ENCODE measurements at regions of chr9 and their contacts with region 1.

Region 1: GRCh38 chr9:109012876-109013678 is at the start of gene CTNNAL1:
- DNase-seq: peak; percentile 74 to 92 (median 87)
- ATAC-seq: peak; percentile 91
- H3K4me3 ChIP-seq: peak within 1 kb of the TSS; percentile 45 to 56
- H3K4me3 Mint-ChIP-seq: peak within 1 kb of the TSS; percentile 95
- H3K27ac ChIP-seq: peak within 1 kb of the TSS; percentile 47 to 68
- H3K27ac Mint-ChIP-seq: peak within 1 kb of the TSS; percentile 91
- H3K4me1 ChIP-seq: peaks cover 7% of the 10 kb centered on the region
- H3K4me1 Mint-ChIP-seq: peaks cover 26% of the 10 kb centered on the region
- H3K27me3 ChIP-seq: no peaks in the 10 kb centered on the region
- H3K27me3 Mint-ChIP-seq: peaks cover 10% of the 10 kb centered on the region
- CTCF ChIP-seq: no peak
- total RNA-seq, gene CTNNAL1: 4.5 to 4.8 TPM

Region 2: DNA sequence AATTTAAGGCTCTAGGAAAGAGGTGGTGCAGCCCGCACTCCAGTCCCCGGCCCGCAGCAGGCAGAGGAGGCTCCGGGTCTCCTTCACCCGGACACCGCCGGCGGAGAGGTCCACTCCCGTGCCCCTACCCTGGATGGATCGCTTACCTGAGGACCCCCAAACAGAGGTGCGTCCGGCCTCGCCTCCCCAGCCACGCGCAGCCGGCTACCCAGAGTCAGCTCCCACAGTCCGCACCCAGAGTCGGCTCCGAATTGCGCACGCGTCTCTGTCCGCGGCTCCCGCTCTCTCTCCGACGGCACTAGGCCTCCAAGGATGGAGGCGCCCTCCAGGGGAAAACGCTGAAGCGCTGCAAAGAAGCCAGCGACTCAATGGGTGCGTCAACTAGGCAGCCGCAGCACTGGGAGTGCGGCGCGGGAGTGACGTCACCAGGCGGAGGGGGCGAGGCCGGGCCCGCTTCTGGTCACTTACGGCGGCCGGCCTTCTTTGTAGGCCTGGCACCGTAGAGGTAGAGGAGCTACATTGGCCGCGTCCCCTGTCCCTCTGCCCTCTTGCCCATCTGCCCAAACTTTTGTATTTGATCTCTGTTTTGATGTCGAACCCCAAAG is 79.3 kb before region 1 on chr9 and contains the start of gene ELP1:
- CTCF ChIA-PET with region 1: no interaction called
- POLR2A ChIA-PET with region 1: no interaction called
- intact Hi-C with region 1: loop called (anchors 1 to 2 kb)
- DNase-seq: peak; percentile 84 to 96 (median 93)
- ATAC-seq: peak; percentile 85
- H3K4me3 ChIP-seq: peak within 1 kb of the TSS; percentile 81 to 95
- H3K4me3 Mint-ChIP-seq: peak within 1 kb of the TSS; percentile 98
- H3K27ac ChIP-seq: peak within 1 kb of the TSS; percentile 92 to 93
- H3K27ac Mint-ChIP-seq: peak within 1 kb of the TSS; percentile 97
- H3K4me1 ChIP-seq: peaks cover 21% of the 10 kb centered on the region
- H3K4me1 Mint-ChIP-seq: peaks cover 52% of the 10 kb centered on the region
- H3K27me3 ChIP-seq: no peaks in the 10 kb centered on the region
- H3K27me3 Mint-ChIP-seq: no peaks in the 10 kb centered on the region
- CTCF ChIP-seq: no peak
- total RNA-seq, gene ELP1: 22.4 to 26.8 TPM

Region 3: GRCh38 chr9:109101810-109102209 is 88.7 kb after region 1 on chr9:
- CTCF ChIA-PET with region 1: no interaction called
- POLR2A ChIA-PET with region 1: no interaction called
- intact Hi-C with region 1: loop called in 1 of 2 experiments (anchors 5 kb)
- DNase-seq: peak in 2 of 9 experiments; percentile 38 to 73
- ATAC-seq: peak; percentile 72
- H3K4me3 ChIP-seq: peak overlapping the region; percentile 21 to 38
- H3K4me3 Mint-ChIP-seq: peak overlapping the region; percentile 73
- H3K27ac ChIP-seq: peak overlapping the region; percentile 54 to 71
- H3K27ac Mint-ChIP-seq: peak overlapping the region; percentile 90
- H3K4me1 ChIP-seq: peaks cover 51% of the 10 kb centered on the region
- H3K4me1 Mint-ChIP-seq: peaks cover 66% of the 10 kb centered on the region
- H3K27me3 ChIP-seq: no peaks in the 10 kb centered on the region
- H3K27me3 Mint-ChIP-seq: no peaks in the 10 kb centered on the region
- CTCF ChIP-seq: no peak

Region 4: GRCh38 chr9:110048403-110048975 is 1035.4 kb after region 1 on chr9:
- CTCF ChIA-PET with region 1: no interaction called
- POLR2A ChIA-PET with region 1: no interaction called
- intact Hi-C with region 1: loop called in 1 of 2 experiments (anchors 10 kb)
- DNase-seq: peak; percentile 47 to 84 (median 61)
- ATAC-seq: peak; percentile 93
- H3K4me3 ChIP-seq: peak overlapping the region; percentile 38 to 63
- H3K4me3 Mint-ChIP-seq: peak overlapping the region; percentile 88
- H3K27ac ChIP-seq: no peak overlapping the region
- H3K27ac Mint-ChIP-seq: no peak overlapping the region
- H3K4me1 ChIP-seq: peaks cover 15% of the 10 kb centered on the region
- H3K4me1 Mint-ChIP-seq: peaks cover 31% of the 10 kb centered on the region
- H3K27me3 ChIP-seq: peaks cover 0 to 7% of the 10 kb centered on the region in 2 experiments
- H3K27me3 Mint-ChIP-seq: peaks cover 24% of the 10 kb centered on the region
- CTCF ChIP-seq: no peak

Region 5: DNA sequence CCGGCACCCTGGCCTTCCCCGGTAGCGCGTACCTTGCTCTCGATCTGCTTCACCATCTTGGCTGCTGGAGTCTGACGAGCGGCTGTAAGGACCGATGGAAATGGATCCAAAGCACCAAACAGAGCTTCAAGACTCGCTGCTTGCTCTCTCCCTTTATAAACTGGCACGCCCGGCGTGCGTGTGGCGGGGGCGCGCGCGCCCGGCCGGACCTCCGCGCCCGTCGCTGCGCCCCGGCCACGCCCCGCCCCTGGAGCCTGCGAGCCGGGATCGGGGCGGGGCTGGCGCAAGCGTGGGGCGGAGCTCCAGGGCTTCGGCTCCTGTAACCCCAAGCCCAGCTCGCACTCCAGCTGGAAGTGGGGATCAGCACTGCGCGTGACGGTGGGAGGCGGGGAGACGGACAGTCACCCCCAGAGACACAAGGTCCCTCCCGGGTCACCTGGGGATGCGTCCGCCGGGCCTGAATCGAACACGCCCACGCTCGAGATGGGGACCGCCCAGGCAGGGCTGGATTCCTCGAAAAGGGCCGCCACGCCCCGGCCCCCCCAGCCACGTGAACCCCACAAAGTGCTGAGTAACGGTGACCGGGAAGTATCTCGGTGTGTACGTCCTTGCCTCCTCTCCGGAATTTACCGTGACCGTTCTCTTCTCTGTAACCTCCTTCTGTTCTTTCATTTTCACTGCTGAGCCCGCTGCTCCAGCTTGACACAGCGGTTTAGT is 1243.5 kb after region 1 on chr9 and contains the start of gene TXN:
- CTCF ChIA-PET with region 1: no interaction called
- POLR2A ChIA-PET with region 1: no interaction called
- intact Hi-C with region 1: loop called in 1 of 2 experiments (anchors 10 kb)
- DNase-seq: peak; percentile 60 to 89 (median 78)
- ATAC-seq: peak; percentile 79
- H3K4me3 ChIP-seq: peak within 1 kb of the TSS; percentile 81 to 88
- H3K4me3 Mint-ChIP-seq: peak within 1 kb of the TSS; percentile 96
- H3K27ac ChIP-seq: peak within 1 kb of the TSS; percentile 55 to 68
- H3K27ac Mint-ChIP-seq: peak within 1 kb of the TSS; percentile 86
- H3K4me1 ChIP-seq: peaks cover 4% of the 10 kb centered on the region
- H3K4me1 Mint-ChIP-seq: peaks cover 36% of the 10 kb centered on the region
- H3K27me3 ChIP-seq: no peaks in the 10 kb centered on the region
- H3K27me3 Mint-ChIP-seq: no peaks in the 10 kb centered on the region
- CTCF ChIP-seq: no peak
- total RNA-seq, gene TXN: 16.0 to 18.0 TPM

Measured in CD8-positive, alpha-beta T cell (primary cell).